Astrocyte of the cerebellum (primary cell): ENCODE measurements at regions of chr17 and their contacts with region 1.

Region 1: DNA sequence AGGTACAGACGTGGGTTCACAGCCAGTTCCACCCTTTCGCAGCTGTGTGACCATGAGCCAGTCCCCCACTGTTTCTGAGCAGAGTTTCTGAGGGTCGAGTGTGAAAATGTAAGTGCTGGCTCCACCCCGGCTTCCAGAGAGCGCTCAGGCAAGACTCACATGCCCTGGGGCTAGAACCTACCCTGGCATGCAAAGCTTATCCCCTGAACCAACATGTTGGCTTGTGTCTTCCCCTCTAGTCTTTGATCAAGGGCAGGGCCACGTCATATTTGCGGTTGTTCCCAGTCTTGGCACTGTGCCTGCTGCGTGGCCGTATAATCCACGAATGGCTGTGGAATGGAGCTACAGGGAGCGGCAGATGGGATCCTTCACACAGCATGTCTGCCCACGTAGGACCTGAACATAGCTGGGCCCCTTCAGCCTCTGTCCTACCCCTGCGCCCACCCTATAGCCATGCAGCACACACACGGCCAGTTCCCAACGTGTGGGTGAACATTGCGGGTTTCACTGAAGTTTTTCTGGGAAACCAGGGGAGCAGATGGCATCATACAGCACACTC is 84.8 kb downstream of the MRM1 start:
- DNase-seq: no peak
- H3K4me3 ChIP-seq: no peak overlapping the region
- CTCF ChIP-seq: no peak

Region 2: DNA sequence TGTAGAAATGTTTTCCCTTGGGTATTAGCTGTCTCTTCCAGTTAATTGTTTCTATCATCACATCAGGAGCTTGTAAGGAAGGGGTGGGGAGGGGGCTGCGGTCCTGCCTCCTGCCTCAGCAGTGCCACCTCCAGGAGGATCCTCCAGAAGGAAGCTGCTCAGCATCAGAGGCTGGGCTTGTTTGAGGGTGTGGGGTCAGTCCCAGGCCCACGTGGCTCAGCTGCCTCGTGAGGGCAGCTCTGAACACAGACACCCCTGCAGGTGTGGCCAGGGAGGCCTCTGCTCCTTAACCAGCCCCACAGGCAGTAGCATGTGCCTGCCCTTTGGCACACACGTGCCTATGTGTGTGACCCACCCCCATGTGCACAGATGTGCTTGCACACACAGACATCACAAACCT is 38.6 kb before region 1 on chr17:
- in situ Hi-C with region 1: loop called (anchors 5 kb)
- DNase-seq: no peak
- H3K4me3 ChIP-seq: no peak overlapping the region
- CTCF ChIP-seq: peak; percentile 17

Region 3: DNA sequence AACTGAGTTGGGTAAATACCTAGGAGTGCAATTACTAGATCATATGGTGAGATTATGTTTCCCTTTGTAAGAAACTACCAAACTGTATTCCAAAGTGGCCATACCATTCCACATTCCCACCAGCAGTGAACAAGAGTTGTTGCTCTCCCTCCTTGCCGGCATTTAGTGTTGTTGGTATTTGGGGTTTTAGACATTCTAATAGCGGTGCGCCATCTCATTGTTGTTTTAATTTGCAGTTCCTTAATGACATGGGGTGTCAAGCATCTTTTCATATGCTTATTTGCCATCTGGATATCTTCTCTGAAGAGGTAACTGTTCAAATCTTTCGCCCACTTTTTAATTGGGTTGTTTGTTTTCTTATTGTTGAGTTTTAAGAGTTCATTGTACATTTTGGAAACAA is 86.8 kb after region 1 on chr17:
- in situ Hi-C with region 1: loop called (anchors 5 kb)
- DNase-seq: no peak
- H3K4me3 ChIP-seq: no peak overlapping the region
- CTCF ChIP-seq: no peak